WTC11 (cell line): ENCODE measurements at regions of chr19 and their contacts with region 1.

Region 1: DNA sequence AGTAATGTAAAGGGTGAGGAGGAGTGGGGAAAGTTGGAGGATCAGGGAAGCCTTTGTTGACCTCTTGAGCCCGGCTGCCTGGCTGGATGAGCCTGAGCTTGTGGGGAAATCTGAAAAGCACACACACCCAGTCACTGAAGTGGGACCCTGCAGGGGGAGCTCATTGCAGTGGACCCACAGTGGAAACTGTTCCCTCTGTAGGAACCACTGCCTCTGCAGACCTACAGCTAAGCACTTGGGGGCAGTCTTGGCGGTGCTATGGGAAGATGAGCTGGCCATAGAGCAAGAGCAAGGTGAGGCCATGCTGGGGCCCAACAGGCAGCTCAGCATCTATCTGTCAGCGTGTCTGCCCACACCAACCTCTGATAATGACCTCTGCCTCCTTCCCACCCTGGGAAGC is 294.8 kb downstream of the TSHZ3 start:
- DNase-seq: peak; percentile 79
- ATAC-seq: peak; percentile 100
- H3K4me3 Mint-ChIP-seq: no peak overlapping the region
- H3K27ac Mint-ChIP-seq: no peak overlapping the region
- H3K4me1 Mint-ChIP-seq: peaks cover 15% of the 10 kb centered on the region
- H3K27me3 Mint-ChIP-seq: no peaks in the 10 kb centered on the region
- CTCF ChIP-seq: peak; percentile 50

Region 2: DNA sequence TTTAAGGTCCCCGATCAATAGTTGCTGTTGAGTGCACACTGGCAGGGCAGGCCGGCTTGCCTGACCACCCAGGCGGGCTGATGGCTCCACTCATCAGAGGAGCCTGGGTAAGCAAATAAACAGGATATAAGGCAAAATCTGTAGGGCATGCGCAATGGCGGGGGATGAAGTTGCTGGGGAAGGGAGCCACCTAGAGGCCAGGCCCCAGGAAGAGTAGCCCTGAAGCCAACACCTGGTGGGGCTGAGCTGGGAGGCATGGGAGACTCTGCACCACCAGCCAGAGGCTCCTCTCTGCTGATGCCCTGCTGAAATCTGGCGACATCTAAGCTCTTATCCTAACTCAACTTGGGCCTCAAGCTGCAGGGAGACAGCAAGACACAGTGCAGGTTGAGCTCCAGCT is 357.9 kb before region 1 on chr19:
- CTCF ChIA-PET with region 1: interaction called, 14 read pairs
- POLR2A ChIA-PET with region 1: no interaction called
- DNase-seq: peak; percentile 82
- ATAC-seq: peak; percentile 93
- H3K4me3 Mint-ChIP-seq: peak overlapping the region; percentile 20; the same call in 1 of the 2 replicates
- H3K27ac Mint-ChIP-seq: no peak overlapping the region; the same call in 1 of the 2 replicates
- H3K4me1 Mint-ChIP-seq: peaks cover 46% of the 10 kb centered on the region
- H3K27me3 Mint-ChIP-seq: no peaks in the 10 kb centered on the region
- CTCF ChIP-seq: no peak

Region 3: GRCh38 chr19:31015778-31016177 is 38.7 kb before region 1 on chr19:
- CTCF ChIA-PET with region 1: no interaction called
- POLR2A ChIA-PET with region 1: no interaction called
- DNase-seq: no peak
- ATAC-seq: no peak
- H3K4me3 Mint-ChIP-seq: no peak overlapping the region
- H3K27ac Mint-ChIP-seq: no peak overlapping the region
- H3K4me1 Mint-ChIP-seq: no peaks in the 10 kb centered on the region
- H3K27me3 Mint-ChIP-seq: peaks cover 10% of the 10 kb centered on the region; the same call in 1 of the 2 replicates
- CTCF ChIP-seq: no peak

Region 4: DNA sequence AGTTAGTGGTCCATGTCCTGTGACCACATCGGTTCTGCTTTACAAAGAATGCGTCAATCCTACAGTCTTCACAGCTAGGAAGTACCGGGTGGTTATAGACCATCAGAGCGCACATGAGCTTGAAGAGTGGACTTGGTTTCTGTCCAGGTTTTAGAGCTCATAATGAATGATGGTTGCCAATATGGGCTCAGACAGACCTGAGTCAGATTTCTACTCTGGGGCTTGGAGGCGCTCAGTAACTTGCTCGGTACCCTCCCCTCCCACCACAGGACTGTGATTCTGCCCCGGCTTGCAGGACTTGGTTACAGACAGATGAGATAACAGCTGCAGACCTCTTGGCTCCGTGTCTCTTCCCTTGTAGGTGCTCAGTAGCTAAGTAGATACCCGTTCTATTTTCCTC is 10.1 kb after region 1 on chr19:
- CTCF ChIA-PET with region 1: interaction called, 20 read pairs
- POLR2A ChIA-PET with region 1: no interaction called
- DNase-seq: no peak
- ATAC-seq: no peak
- H3K4me3 Mint-ChIP-seq: no peak overlapping the region
- H3K27ac Mint-ChIP-seq: no peak overlapping the region
- H3K4me1 Mint-ChIP-seq: 0 out of 2 replicates have a peak, but pooled peaks cover 9% of the 10 kb centered on the region
- H3K27me3 Mint-ChIP-seq: no peaks in the 10 kb centered on the region
- CTCF ChIP-seq: no peak

Region 5: GRCh38 chr19:31085125-31085524 is 30.7 kb after region 1 on chr19:
- CTCF ChIA-PET with region 1: no interaction called
- POLR2A ChIA-PET with region 1: no interaction called
- DNase-seq: no peak
- ATAC-seq: no peak
- H3K4me3 Mint-ChIP-seq: no peak overlapping the region
- H3K27ac Mint-ChIP-seq: no peak overlapping the region
- H3K4me1 Mint-ChIP-seq: no peaks in the 10 kb centered on the region
- H3K27me3 Mint-ChIP-seq: no peaks in the 10 kb centered on the region
- CTCF ChIP-seq: no peak

Region 6: DNA sequence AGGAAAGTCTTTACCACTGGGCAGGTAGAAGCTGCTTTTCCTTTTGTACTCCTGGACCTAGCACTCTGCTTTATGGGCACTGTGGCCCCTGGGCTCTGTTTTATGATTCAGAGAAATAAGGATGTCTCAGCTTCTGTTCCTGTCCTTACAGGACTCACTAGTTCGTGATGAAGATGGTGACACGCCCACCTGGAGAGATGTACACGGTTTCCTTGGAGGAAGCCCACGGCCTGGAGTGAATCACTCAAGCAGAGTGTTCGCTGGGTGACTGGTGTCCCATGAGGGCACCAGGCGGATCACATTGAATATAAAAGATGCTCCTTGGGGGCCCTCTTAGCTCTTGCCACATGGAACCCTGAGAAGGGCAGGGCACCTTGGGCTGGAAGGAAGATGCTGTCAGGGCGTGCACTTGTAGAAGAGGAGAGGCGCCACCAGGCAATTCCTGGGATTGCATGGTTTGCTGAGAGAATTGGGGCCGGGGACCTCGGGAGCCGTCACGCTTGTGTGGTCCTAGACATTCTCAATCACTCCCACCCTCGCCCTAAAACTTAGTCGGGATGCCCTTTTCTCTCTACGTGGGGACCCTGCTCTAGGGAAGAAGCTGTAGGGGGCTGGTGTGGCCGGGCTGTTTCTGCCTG is 92.2 kb after region 1 on chr19:
- CTCF ChIA-PET with region 1: interaction called, 14 read pairs
- POLR2A ChIA-PET with region 1: no interaction called
- DNase-seq: peak; percentile 23
- ATAC-seq: no peak
- H3K4me3 Mint-ChIP-seq: no peak overlapping the region
- H3K27ac Mint-ChIP-seq: no peak overlapping the region
- H3K4me1 Mint-ChIP-seq: peaks cover 8% of the 10 kb centered on the region
- H3K27me3 Mint-ChIP-seq: no peaks in the 10 kb centered on the region
- CTCF ChIP-seq: no peak

Region 7: GRCh38 chr19:31338069-31338776 is 283.8 kb after region 1 on chr19:
- CTCF ChIA-PET with region 1: interaction called, 31 read pairs
- POLR2A ChIA-PET with region 1: no interaction called
- DNase-seq: peak; percentile 79
- ATAC-seq: peak; percentile 89
- H3K4me3 Mint-ChIP-seq: peak overlapping the region; percentile 27; the same call in 1 of the 2 replicates
- H3K27ac Mint-ChIP-seq: peak overlapping the region; percentile 4
- H3K4me1 Mint-ChIP-seq: peaks cover 89% of the 10 kb centered on the region
- H3K27me3 Mint-ChIP-seq: no peaks in the 10 kb centered on the region
- CTCF ChIP-seq: peak; percentile 56

Region 8: DNA sequence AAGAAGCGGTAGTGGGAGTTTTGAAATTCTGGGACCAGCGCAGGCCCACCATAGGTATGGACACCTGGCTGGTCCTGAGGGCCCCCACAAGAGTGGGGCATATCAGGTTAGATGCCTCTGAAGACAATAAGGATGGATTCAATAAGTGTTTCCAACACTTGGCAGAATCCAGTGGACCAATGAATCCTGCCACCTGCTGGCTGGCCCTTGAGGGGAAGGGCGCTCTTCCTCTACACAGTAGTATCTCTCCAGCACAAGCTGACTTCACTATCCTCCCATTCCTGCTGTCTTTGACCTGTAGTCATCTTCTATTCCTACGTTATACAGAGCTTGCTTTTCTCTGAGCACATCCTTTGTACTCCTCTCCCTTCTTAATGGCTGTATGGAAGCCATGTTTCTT is 494.5 kb after region 1 on chr19:
- CTCF ChIA-PET with region 1: interaction called, 12 read pairs
- POLR2A ChIA-PET with region 1: no interaction called
- DNase-seq: peak; percentile 34
- ATAC-seq: peak; percentile 65
- H3K4me3 Mint-ChIP-seq: no peak overlapping the region
- H3K27ac Mint-ChIP-seq: no peak overlapping the region
- H3K4me1 Mint-ChIP-seq: peaks cover 18% of the 10 kb centered on the region
- H3K27me3 Mint-ChIP-seq: peaks cover 9% of the 10 kb centered on the region
- CTCF ChIP-seq: 0 out of 2 replicates have a peak, but pooled peaks have one; percentile 27